ENCODE measurements at regions of chr10 and their contacts with region 1.

Region 1: DNA sequence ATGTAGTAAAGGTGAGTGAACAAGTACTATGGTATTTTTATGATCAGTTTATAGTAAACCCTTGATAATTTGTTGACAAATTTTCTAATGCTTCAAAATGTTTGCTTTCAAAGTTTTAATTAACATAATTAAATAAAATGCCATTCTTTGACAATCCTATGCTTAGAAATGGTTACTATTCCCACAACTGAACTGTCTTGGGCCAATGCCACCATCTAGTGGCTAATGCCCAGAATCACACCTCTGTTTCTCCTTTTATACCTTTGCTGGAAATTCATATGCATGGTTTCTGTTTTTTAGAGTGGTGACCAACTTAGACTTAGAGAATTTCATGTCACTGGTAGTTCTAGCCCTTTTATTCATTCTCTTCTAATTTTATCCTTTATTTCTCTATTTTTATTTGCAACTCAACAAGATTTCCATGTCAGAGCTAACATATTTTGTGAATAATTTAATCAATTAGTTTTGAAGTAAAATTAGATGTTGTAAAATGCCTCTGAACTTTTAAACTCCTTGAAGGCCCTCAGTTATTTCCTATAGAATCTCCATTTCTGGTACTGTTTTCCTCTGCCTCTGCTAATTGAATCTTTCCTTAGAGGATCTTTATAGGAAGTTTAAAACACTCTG is 31.1 kb downstream of the PCGF5 start:
- DNase-seq: peak; percentile 16 to 72 (median 64)
- ATAC-seq: peak; percentile 89
- H3K4me3 ChIP-seq: no peak overlapping the region
- H3K4me3 Mint-ChIP-seq: no peak overlapping the region
- H3K27ac ChIP-seq: no peak overlapping the region
- H3K27ac Mint-ChIP-seq: no peak overlapping the region
- H3K4me1 ChIP-seq: peaks cover under 1 to 13% of the 10 kb centered on the region in 2 donors
- H3K4me1 Mint-ChIP-seq: peaks cover 5 to 15% (median 9%) of the 10 kb centered on the region in 7 donors
- H3K27me3 ChIP-seq: no peaks in the 10 kb centered on the region
- H3K27me3 Mint-ChIP-seq: no peaks in the 10 kb centered on the region

Region 2: DNA sequence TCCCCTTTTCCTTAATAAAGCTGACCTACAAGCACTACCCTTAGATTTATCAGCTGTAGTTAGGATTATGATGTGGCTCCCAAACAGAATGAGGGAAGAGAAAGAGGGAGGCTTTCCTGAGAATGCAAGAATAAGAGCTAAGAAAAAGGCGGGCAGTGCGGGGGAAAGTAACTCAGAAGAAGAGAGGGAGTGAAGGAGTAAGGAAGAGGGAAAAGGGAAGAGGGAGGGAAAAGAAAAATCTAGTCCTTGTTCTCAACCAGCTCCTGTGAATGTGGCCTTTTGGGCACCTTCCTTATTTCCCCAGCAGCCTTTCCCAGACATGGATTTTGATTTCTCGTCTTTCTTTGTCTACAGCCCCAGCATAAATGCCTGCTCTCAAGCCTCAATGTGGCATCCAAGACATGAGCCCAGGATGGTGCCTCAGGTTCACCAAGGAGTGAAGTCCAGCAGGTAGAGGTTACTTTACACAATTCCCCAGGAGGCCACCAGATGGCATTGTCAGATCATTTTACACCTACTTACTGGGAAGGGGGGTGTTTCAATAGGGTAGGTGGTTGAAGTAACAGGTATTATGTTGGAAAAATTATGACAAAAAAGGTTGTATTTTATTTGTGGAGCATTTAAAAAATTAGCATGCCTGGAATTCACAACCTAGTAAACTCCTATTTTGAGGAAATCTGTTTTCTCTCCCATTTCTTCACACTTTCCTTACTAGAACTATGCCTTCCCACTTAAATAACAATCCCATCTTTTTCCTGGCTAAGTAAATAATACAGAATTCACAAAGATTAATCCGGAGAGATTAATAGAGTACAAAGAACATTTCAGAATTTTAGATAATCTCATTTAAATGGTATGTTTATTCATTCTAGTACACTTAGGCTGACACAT is 500.2 kb before region 1 on chr10:
- CTCF ChIA-PET with region 1: no interaction called
- POLR2A ChIA-PET with region 1: no interaction called
- intact Hi-C with region 1: loop called (anchors 1 to 2 kb)
- DNase-seq: peak in 8 of 9 donors; percentile 10 to 38 (median 25)
- ATAC-seq: peak; percentile 54
- H3K4me3 ChIP-seq: no peak overlapping the region
- H3K4me3 Mint-ChIP-seq: no peak overlapping the region
- H3K27ac ChIP-seq: no peak overlapping the region
- H3K27ac Mint-ChIP-seq: no peak overlapping the region
- H3K4me1 ChIP-seq: no peaks in the 10 kb centered on the region
- H3K4me1 Mint-ChIP-seq: no peaks in the 10 kb centered on the region
- H3K27me3 ChIP-seq: no peaks in the 10 kb centered on the region
- H3K27me3 Mint-ChIP-seq: peaks cover 38 to 54% (median 48%) of the 10 kb centered on the region in 5 donors

Region 3: DNA sequence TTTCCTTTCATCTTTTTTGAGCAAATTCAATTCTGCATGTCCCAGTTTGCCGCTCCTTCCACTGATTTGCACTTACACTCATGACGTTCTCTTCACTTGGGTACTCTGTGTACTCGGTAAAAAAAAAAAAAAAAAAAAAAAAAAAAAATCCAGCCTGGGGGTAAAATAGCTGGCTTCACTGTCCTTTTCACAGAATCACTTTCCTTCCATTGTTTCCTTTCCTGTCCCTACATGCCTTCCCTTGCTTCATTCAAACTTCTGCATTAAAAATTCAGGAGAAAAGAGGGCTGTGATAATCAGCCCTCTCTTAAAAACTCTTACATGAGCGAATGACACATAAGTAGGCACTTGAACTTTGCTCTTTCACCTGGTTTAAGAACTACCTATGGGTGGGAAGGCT is 339.4 kb before region 1 on chr10:
- CTCF ChIA-PET with region 1: interaction called, 18 read pairs
- POLR2A ChIA-PET with region 1: interaction called, 3 read pairs
- intact Hi-C with region 1: loop called (anchors 1 kb)
- DNase-seq: no peak
- ATAC-seq: no peak
- H3K4me3 ChIP-seq: no peak overlapping the region
- H3K4me3 Mint-ChIP-seq: no peak overlapping the region
- H3K27ac ChIP-seq: no peak overlapping the region
- H3K27ac Mint-ChIP-seq: no peak overlapping the region
- H3K4me1 ChIP-seq: peaks cover 0 to 4% of the 10 kb centered on the region in 2 donors
- H3K4me1 Mint-ChIP-seq: peaks cover 0 to 11% (median 4%) of the 10 kb centered on the region in 7 donors
- H3K27me3 ChIP-seq: no peaks in the 10 kb centered on the region
- H3K27me3 Mint-ChIP-seq: peaks cover 0 to 16% (median 4%) of the 10 kb centered on the region in 5 donors

Region 4: GRCh38 chr10:91043173-91043910 is 208.2 kb before region 1 on chr10:
- CTCF ChIA-PET with region 1: interaction called, 7 read pairs
- POLR2A ChIA-PET with region 1: interaction called, 4 read pairs
- intact Hi-C with region 1: loop called in 1 of 2 experiments (anchors 1 kb)
- DNase-seq: no peak
- ATAC-seq: no peak
- H3K4me3 ChIP-seq: no peak overlapping the region
- H3K4me3 Mint-ChIP-seq: no peak overlapping the region
- H3K27ac ChIP-seq: no peak overlapping the region
- H3K27ac Mint-ChIP-seq: no peak overlapping the region
- H3K4me1 ChIP-seq: no peaks in the 10 kb centered on the region
- H3K4me1 Mint-ChIP-seq: peaks cover 0 to 1% (median 0%) of the 10 kb centered on the region in 7 donors
- H3K27me3 ChIP-seq: no peaks in the 10 kb centered on the region
- H3K27me3 Mint-ChIP-seq: peaks cover 0 to 31% (median 12%) of the 10 kb centered on the region in 5 donors

Region 5: DNA sequence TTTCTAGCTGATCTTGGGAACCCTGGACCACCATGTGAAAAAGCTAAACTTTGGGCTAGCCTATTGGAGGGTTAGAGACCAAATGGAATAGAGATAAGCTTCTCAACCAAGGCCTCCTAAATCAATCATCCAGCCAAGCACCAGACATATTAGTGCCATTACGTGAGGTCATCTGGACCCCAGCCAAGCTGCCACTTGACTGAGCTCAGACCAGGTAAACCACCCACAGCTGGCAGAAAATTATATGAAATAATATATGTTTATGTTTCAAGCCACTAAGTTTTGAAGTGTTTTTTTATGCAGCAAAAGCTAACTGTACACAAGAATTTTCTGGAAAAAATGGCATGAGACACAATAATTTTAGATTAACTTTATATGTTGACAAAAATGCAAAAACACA is 113.7 kb before region 1 on chr10:
- CTCF ChIA-PET with region 1: no interaction called
- POLR2A ChIA-PET with region 1: no interaction called
- intact Hi-C with region 1: no loop called
- DNase-seq: no peak
- ATAC-seq: no peak
- H3K4me3 ChIP-seq: no peak overlapping the region
- H3K4me3 Mint-ChIP-seq: no peak overlapping the region
- H3K27ac ChIP-seq: no peak overlapping the region
- H3K27ac Mint-ChIP-seq: no peak overlapping the region
- H3K4me1 ChIP-seq: no peaks in the 10 kb centered on the region
- H3K4me1 Mint-ChIP-seq: peaks cover 0 to 6% (median 0%) of the 10 kb centered on the region in 7 donors
- H3K27me3 ChIP-seq: no peaks in the 10 kb centered on the region
- H3K27me3 Mint-ChIP-seq: peaks cover 0 to 9% (median 3%) of the 10 kb centered on the region in 5 donors

Region 6: GRCh38 chr10:91210435-91210834 is 41.1 kb before region 1 on chr10:
- CTCF ChIA-PET with region 1: no interaction called
- POLR2A ChIA-PET with region 1: no interaction called
- intact Hi-C with region 1: loop called in 1 of 2 experiments (anchors 5 kb)
- DNase-seq: no peak
- ATAC-seq: peak; percentile 56
- H3K4me3 ChIP-seq: no peak overlapping the region
- H3K4me3 Mint-ChIP-seq: peak overlapping the region in 1 of 10 donors; percentile 11
- H3K27ac ChIP-seq: no peak overlapping the region
- H3K27ac Mint-ChIP-seq: peak overlapping the region in 4 of 9 donors; percentile 29 to 62 (median 45)
- H3K4me1 ChIP-seq: peaks cover 11 to 25% of the 10 kb centered on the region in 2 donors
- H3K4me1 Mint-ChIP-seq: peaks cover 40 to 79% (median 66%) of the 10 kb centered on the region in 7 donors
- H3K27me3 ChIP-seq: no peaks in the 10 kb centered on the region
- H3K27me3 Mint-ChIP-seq: no peaks in the 10 kb centered on the region

Region 7: GRCh38 chr10:91229683-91230082 is 21.9 kb before region 1 on chr10:
- CTCF ChIA-PET with region 1: interaction called, 6 read pairs
- POLR2A ChIA-PET with region 1: no interaction called
- intact Hi-C with region 1: loop called in 1 of 2 experiments (anchors 2 kb)
- DNase-seq: no peak
- ATAC-seq: no peak
- H3K4me3 ChIP-seq: no peak overlapping the region
- H3K4me3 Mint-ChIP-seq: no peak overlapping the region
- H3K27ac ChIP-seq: no peak overlapping the region
- H3K27ac Mint-ChIP-seq: no peak overlapping the region
- H3K4me1 ChIP-seq: peaks cover 8% of the 10 kb centered on the region in 2 donors
- H3K4me1 Mint-ChIP-seq: peaks cover 22 to 49% (median 35%) of the 10 kb centered on the region in 7 donors
- H3K27me3 ChIP-seq: no peaks in the 10 kb centered on the region
- H3K27me3 Mint-ChIP-seq: no peaks in the 10 kb centered on the region

Region 8: DNA sequence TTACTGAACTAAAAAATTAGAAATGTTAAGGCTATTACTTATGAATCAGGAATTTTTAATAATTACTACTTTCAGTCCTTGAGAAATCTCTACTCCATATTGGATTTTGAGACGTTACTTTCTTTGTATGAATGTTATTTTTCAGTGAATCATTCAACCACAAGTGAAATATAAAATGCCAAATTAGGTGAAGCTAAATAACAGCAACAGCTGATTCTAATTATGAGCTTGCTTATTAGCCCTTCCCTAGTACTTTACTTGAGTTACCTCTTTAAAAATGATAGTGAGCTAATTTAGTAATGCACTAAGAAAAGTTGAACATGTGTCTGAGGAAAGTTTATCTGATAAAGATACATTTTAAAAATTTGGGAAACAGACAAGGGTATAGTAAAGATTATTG is 20.3 kb after region 1 on chr10:
- CTCF ChIA-PET with region 1: no interaction called
- POLR2A ChIA-PET with region 1: no interaction called
- intact Hi-C with region 1: no loop called
- DNase-seq: no peak
- ATAC-seq: no peak
- H3K4me3 ChIP-seq: no peak overlapping the region
- H3K4me3 Mint-ChIP-seq: no peak overlapping the region
- H3K27ac ChIP-seq: no peak overlapping the region
- H3K27ac Mint-ChIP-seq: no peak overlapping the region
- H3K4me1 ChIP-seq: no peaks in the 10 kb centered on the region
- H3K4me1 Mint-ChIP-seq: peaks cover 0 to 4% (median 0%) of the 10 kb centered on the region in 7 donors
- H3K27me3 ChIP-seq: no peaks in the 10 kb centered on the region
- H3K27me3 Mint-ChIP-seq: no peaks in the 10 kb centered on the region

Measured in naive thymus-derived CD4-positive, alpha-beta T cell (primary cell).